ENCODE measurements at regions of chr4 and their contacts with region 1.

Region 1: GRCh38 chr4:15020502-15021286 is 18.4 kb downstream of the CPEB2 start:
- DNase-seq: no peak
- ATAC-seq: no peak
- H3K4me3 ChIP-seq: no peak overlapping the region
- H3K4me3 Mint-ChIP-seq: no peak overlapping the region
- H3K27ac ChIP-seq: no peak overlapping the region
- H3K27ac Mint-ChIP-seq: no peak overlapping the region
- H3K4me1 ChIP-seq: no peaks in the 10 kb centered on the region
- H3K4me1 Mint-ChIP-seq: peaks cover 65% of the 10 kb centered on the region
- H3K27me3 ChIP-seq: no peaks in the 10 kb centered on the region
- H3K27me3 Mint-ChIP-seq: no peaks in the 10 kb centered on the region
- CTCF ChIP-seq: no peak

Region 2: GRCh38 chr4:15034071-15034764 is 13.5 kb after region 1 on chr4:
- CTCF ChIA-PET with region 1: no interaction called
- POLR2A ChIA-PET with region 1: no interaction called
- intact Hi-C with region 1: loop called in 1 of 2 experiments (anchors 1 kb)
- DNase-seq: no peak
- ATAC-seq: no peak
- H3K4me3 ChIP-seq: no peak overlapping the region
- H3K4me3 Mint-ChIP-seq: no peak overlapping the region
- H3K27ac ChIP-seq: no peak overlapping the region
- H3K27ac Mint-ChIP-seq: no peak overlapping the region
- H3K4me1 ChIP-seq: no peaks in the 10 kb centered on the region
- H3K4me1 Mint-ChIP-seq: peaks cover 22% of the 10 kb centered on the region
- H3K27me3 ChIP-seq: no peaks in the 10 kb centered on the region
- H3K27me3 Mint-ChIP-seq: no peaks in the 10 kb centered on the region
- CTCF ChIP-seq: no peak